T-cell (primary cell): ENCODE measurements at regions of chr20 and their contacts with region 1.

Region 1: DNA sequence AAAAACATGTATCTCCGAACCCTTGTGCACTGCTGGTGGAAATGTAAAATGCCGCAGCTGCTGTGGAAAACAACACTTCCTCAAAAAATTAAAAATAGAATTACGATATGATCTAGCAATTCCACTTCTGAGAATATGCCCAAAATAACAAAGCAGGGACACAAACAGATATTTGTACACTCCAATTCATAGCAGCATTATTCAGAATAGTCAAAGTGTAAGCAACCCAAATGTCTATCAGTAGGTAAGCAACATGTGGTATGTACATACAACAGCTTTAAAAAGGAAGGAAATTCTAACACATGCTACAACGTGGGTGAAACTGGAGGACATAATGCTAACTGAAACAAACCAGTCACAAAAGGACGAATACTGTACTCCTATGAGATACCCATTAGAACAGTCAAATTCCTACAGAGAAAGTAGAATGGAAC is 5.7 kb upstream of the RAB5IF start:
- DNase-seq: no peak
- ATAC-seq: no peak
- H3K4me3 ChIP-seq: no peak overlapping the region
- H3K4me3 Mint-ChIP-seq: no peak overlapping the region
- H3K27ac ChIP-seq: no peak overlapping the region
- H3K27ac Mint-ChIP-seq: no peak overlapping the region
- H3K4me1 ChIP-seq: peaks cover 2 to 25% of the 10 kb centered on the region in 2 experiments
- H3K4me1 Mint-ChIP-seq: peaks cover 19 to 26% (median 25%) of the 10 kb centered on the region in 3 donors
- H3K27me3 ChIP-seq: no peaks in the 10 kb centered on the region
- H3K27me3 Mint-ChIP-seq: no peaks in the 10 kb centered on the region

Region 2: DNA sequence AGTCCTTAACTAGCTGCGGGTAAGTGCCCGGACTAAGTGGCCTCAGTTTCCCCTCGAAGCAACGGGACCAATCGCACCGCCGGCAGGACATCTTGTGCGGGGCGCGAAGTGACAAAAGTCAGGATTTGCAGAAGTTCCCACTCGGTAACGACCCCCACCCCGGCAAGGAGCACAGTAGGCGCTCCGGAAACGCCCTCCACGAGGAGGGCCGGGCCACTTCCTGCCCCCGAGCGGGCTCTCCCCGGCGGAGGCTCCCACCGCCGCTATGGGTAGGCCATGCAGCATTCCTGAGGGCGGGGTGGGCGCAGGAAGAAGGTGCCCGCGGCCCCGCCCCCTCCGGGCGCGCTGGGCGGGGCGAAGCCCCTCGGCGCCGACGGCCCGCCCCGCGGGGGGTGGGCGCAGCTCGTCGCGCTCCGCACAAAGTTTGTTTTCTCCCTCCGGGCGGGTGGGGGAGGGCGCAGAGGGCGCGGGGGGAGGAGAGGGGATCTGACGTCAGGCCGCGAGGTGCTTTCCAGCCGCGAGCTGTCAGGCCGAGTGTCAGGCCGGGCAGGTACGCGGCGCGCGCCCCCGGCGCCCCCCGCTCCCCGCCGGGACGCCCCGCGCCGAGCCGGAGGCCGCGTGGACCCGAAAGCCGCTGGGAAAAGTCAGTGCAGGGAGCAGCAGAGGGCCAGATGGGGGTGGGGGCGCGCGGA is 26.7 kb before region 1 on chr20 and contains the start of gene TGIF2:
- CTCF ChIA-PET with region 1: interaction called, 4 to 7 read pairs
- POLR2A ChIA-PET with region 1: interaction called in 1 of 2 experiments, 10 read pairs
- DNase-seq: peak; percentile 84 to 97 (median 90)
- ATAC-seq: peak; percentile 79 to 85 (median 80)
- H3K4me3 ChIP-seq: peak within 1 kb of the TSS; percentile 77 to 90
- H3K4me3 Mint-ChIP-seq: peak within 1 kb of the TSS; percentile 85 to 89 (median 89)
- H3K27ac ChIP-seq: peak within 1 kb of the TSS; percentile 100
- H3K27ac Mint-ChIP-seq: peak within 1 kb of the TSS; percentile 94 to 98
- H3K4me1 ChIP-seq: peaks cover 4 to 44% of the 10 kb centered on the region in 2 experiments
- H3K4me1 Mint-ChIP-seq: peaks cover 35 to 38% (median 37%) of the 10 kb centered on the region in 3 donors
- H3K27me3 ChIP-seq: peaks cover 0 to 2% of the 10 kb centered on the region in 2 experiments
- H3K27me3 Mint-ChIP-seq: no peaks in the 10 kb centered on the region
- total RNA-seq, gene TGIF2: 31.2 to 39.7 (median 35.6) TPM

Region 3: DNA sequence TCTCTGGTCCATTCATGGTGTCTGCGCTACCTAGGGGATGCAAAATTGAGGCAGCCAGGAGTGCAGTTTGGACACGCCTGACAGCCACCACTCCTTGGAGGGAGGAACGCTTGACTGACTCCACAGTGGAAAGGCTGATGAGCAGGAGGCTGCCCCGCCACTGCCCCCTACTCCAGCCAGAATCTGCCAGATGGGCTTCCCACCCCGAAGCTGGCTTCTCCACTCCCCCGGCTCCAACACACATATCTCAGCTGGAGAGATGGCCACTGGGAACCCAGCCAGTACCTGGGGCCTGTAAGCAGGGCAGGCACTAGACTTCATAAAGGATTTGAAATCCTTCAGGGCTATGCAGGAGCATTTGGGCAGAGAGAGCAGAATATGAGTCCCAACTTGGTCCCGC is 979.2 kb after region 1 on chr20:
- CTCF ChIA-PET with region 1: no interaction called
- POLR2A ChIA-PET with region 1: no interaction called
- DNase-seq: no peak
- ATAC-seq: no peak
- H3K4me3 ChIP-seq: no peak overlapping the region
- H3K4me3 Mint-ChIP-seq: no peak overlapping the region
- H3K27ac ChIP-seq: no peak overlapping the region
- H3K27ac Mint-ChIP-seq: no peak overlapping the region
- H3K4me1 ChIP-seq: no peaks in the 10 kb centered on the region
- H3K4me1 Mint-ChIP-seq: peaks cover 0 to 2% (median 0%) of the 10 kb centered on the region in 3 donors
- H3K27me3 ChIP-seq: peaks cover 0 to 39% of the 10 kb centered on the region in 2 experiments
- H3K27me3 Mint-ChIP-seq: peaks cover 34 to 47% of the 10 kb centered on the region in 2 donors